Caco-2 (cell line): ENCODE measurements at regions of chr17 and their contacts with region 1.

Region 1: DNA sequence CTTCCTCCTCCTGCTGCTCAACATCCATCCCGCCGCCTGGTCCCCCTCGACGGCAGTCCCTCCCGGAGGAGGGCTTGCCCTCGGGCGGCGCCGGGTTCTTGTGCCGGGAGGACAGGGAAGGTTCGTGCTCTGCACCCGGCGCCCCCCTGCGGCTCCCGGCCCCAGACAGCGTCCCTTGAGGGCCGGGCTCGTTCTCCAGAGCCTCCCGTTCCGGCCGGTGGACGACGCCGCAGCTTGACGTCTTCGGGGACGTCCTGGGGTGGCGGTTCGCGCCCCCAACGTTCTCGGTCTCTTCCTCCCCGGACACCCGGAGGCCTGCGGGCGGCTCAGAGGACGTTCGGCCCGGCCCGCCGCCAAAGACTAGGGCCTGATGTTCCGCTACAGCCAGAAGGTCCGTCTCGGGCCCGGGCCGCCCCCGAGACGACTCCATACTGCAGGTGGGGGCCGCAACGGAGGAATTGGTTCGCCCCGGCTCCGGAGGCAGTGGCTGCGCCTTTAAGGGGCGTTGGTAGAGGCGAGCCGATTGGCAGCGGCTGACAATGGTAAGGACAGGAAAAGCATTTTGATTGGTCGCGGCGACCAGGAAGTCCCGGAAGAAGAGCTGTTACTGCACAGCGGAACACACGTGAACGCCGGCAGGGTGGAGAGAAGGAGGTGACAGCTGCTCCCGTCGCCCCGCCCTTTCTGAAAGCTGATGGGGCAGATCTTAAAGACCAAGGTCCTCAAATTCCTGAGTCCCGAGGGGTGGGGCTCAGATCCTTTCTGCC is at the start of gene BORCS6:
- DNase-seq: peak; percentile 89 to 95
- H3K4me3 ChIP-seq: peak within 1 kb of the TSS; percentile 66
- H3K4me3 Mint-ChIP-seq: no peak within 1 kb of the TSS
- H3K27ac Mint-ChIP-seq: peak within 1 kb of the TSS; percentile 63
- H3K4me1 ChIP-seq: peaks cover 13% of the 10 kb centered on the region
- H3K4me1 Mint-ChIP-seq: no peaks in the 10 kb centered on the region
- H3K27me3 ChIP-seq: no peaks in the 10 kb centered on the region
- H3K27me3 Mint-ChIP-seq: no peaks in the 10 kb centered on the region
- CTCF ChIP-seq: no peak
- total RNA-seq, gene BORCS6: 4.2 and 4.7 TPM in 2 replicates

Region 2: GRCh38 chr17:8118769-8119580 is 70.9 kb before region 1 on chr17:
- CTCF ChIA-PET with region 1: no interaction called
- POLR2A ChIA-PET with region 1: no interaction called
- intact Hi-C with region 1: loop called (anchors 2 kb)
- DNase-seq: peak; percentile 83 to 84
- H3K4me3 ChIP-seq: peak overlapping the region; percentile 63
- H3K4me3 Mint-ChIP-seq: peak overlapping the region; percentile 87
- H3K27ac Mint-ChIP-seq: peak overlapping the region; percentile 92
- H3K4me1 ChIP-seq: no peaks in the 10 kb centered on the region; the same call in 1 of the 2 replicates
- H3K4me1 Mint-ChIP-seq: peaks cover 17% of the 10 kb centered on the region
- H3K27me3 ChIP-seq: no peaks in the 10 kb centered on the region; the same call in 1 of the 2 replicates
- H3K27me3 Mint-ChIP-seq: peaks cover 6% of the 10 kb centered on the region
- CTCF ChIP-seq: peak; percentile 57 to 68

Region 3: GRCh38 chr17:8173056-8173870 is 16.6 kb before region 1 on chr17:
- CTCF ChIA-PET with region 1: interaction called, 3 read pairs
- POLR2A ChIA-PET with region 1: interaction called, 17 read pairs
- intact Hi-C with region 1: no loop called
- DNase-seq: peak; percentile 83 to 84
- H3K4me3 ChIP-seq: peak overlapping the region; percentile 34
- H3K4me3 Mint-ChIP-seq: peak overlapping the region; percentile 89
- H3K27ac Mint-ChIP-seq: peak overlapping the region; percentile 100
- H3K4me1 ChIP-seq: no peaks in the 10 kb centered on the region
- H3K4me1 Mint-ChIP-seq: peaks cover 7% of the 10 kb centered on the region
- H3K27me3 ChIP-seq: no peaks in the 10 kb centered on the region
- H3K27me3 Mint-ChIP-seq: no peaks in the 10 kb centered on the region
- CTCF ChIP-seq: no peak

Region 4: GRCh38 chr17:8204761-8205555 is 15.1 kb after region 1 on chr17:
- CTCF ChIA-PET with region 1: interaction called, 4 read pairs
- POLR2A ChIA-PET with region 1: interaction called, 8 read pairs
- intact Hi-C with region 1: loop called (anchors 1 kb)
- DNase-seq: no peak
- H3K4me3 ChIP-seq: no peak overlapping the region
- H3K4me3 Mint-ChIP-seq: no peak overlapping the region
- H3K27ac Mint-ChIP-seq: no peak overlapping the region
- H3K4me1 ChIP-seq: peaks cover 4% of the 10 kb centered on the region; the same call in 1 of the 2 replicates
- H3K4me1 Mint-ChIP-seq: no peaks in the 10 kb centered on the region
- H3K27me3 ChIP-seq: no peaks in the 10 kb centered on the region
- H3K27me3 Mint-ChIP-seq: no peaks in the 10 kb centered on the region
- CTCF ChIP-seq: no peak

Region 5: DNA sequence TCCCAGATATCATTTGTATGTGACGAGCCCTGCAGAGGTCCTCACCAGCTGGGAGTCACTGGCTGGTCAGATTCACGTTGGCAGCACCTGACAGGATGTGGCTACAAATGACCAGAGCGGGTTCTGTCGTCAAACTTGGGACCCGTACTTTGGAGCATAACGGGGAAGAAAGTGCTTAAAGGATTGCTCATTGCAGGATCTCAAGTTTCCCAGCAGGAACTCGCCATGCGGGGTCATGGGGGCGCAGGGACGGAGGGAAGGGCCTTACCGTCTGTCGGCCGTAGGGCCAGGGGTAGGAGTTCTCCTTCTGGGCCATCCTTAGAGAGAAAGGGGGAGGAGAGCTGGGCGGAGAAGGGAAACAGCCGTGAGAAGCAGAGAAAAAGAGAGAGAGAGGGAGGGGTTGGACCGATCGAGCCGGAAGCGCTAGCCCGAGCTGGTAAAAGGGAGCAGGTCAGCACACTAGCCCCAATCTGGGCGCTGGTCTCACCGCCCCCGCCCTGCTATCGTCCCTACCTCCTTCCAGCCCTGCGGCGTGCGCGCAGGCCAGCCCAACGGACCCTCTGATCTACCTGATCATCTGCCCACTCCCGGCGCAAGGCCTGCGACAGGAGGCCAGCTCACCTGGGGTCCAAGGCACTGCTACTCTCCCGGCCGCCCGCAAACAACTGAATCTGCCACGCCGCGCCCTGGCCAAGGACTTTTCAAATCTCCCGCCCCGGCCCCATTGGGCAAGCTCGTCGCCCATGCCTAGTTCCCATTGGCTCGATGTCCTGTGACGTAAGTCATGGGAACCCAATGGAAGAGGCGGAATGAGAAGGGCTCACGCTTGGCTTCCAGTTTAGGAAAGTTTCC is 20.2 kb after region 1 on chr17 and contains the start of gene AURKB:
- CTCF ChIA-PET with region 1: interaction called, 4 read pairs
- POLR2A ChIA-PET with region 1: interaction called, 8 read pairs
- intact Hi-C with region 1: loop called (anchors 1 kb)
- DNase-seq: peak; percentile 90 to 92
- H3K4me3 ChIP-seq: peak within 1 kb of the TSS; percentile 84
- H3K4me3 Mint-ChIP-seq: peak within 1 kb of the TSS; percentile 100
- H3K27ac Mint-ChIP-seq: peak within 1 kb of the TSS; percentile 99
- H3K4me1 ChIP-seq: peaks cover 4% of the 10 kb centered on the region; the same call in 1 of the 2 replicates
- H3K4me1 Mint-ChIP-seq: peaks cover 8% of the 10 kb centered on the region
- H3K27me3 ChIP-seq: no peaks in the 10 kb centered on the region
- H3K27me3 Mint-ChIP-seq: no peaks in the 10 kb centered on the region
- CTCF ChIP-seq: no peak
- total RNA-seq, gene AURKB: 82.8 and 89.4 TPM in 2 replicates